B cell (primary cell): ENCODE measurements at regions of chr17 and their contacts with region 1.

Region 1: DNA sequence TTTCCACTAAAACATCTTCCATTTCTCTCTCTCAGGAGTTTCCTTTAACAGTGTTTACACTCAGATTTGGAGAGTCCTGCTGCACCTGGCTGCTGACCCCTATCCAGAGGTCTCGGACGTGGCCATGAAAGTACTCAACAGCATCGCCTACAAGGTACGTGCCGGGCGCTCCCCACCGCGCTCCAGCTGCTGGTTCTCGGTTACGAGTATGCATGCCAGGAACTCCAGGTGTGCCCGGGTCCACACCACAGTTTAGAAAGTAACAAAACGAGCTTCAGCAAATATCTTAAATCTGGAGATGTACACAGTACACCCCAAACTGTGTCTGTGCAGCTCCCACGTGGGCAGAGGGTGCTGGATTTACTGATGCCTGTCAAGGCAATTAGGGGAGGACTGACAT is 82.9 kb upstream of the CHMP6 start:
- DNase-seq: no peak
- ATAC-seq: no peak
- H3K4me3 ChIP-seq: no peak overlapping the region
- H3K4me3 Mint-ChIP-seq: no peak overlapping the region
- H3K27ac ChIP-seq: peak overlapping the region in 1 of 2 donors; percentile 100
- H3K27ac Mint-ChIP-seq: peak overlapping the region; percentile 68
- H3K4me1 ChIP-seq: peaks cover 50 to 57% of the 10 kb centered on the region in 2 donors
- H3K4me1 Mint-ChIP-seq: peaks cover 46% of the 10 kb centered on the region
- H3K27me3 ChIP-seq: no peaks in the 10 kb centered on the region
- H3K27me3 Mint-ChIP-seq: no peaks in the 10 kb centered on the region
- CTCF ChIP-seq: no peak

Region 2: GRCh38 chr17:80683625-80684104 is 225.1 kb before region 1 on chr17:
- CTCF ChIA-PET with region 1: no interaction called
- POLR2A ChIA-PET with region 1: no interaction called
- intact Hi-C with region 1: no loop called
- DNase-seq: no peak
- ATAC-seq: no peak
- H3K4me3 ChIP-seq: no peak overlapping the region
- H3K4me3 Mint-ChIP-seq: no peak overlapping the region
- H3K27ac ChIP-seq: no peak overlapping the region
- H3K27ac Mint-ChIP-seq: no peak overlapping the region
- H3K4me1 ChIP-seq: peaks cover 3 to 9% of the 10 kb centered on the region in 2 donors
- H3K4me1 Mint-ChIP-seq: peaks cover 9% of the 10 kb centered on the region
- H3K27me3 ChIP-seq: no peaks in the 10 kb centered on the region
- H3K27me3 Mint-ChIP-seq: no peaks in the 10 kb centered on the region
- CTCF ChIP-seq: no peak

Region 3: GRCh38 chr17:80789356-80789902 is 119.3 kb before region 1 on chr17:
- CTCF ChIA-PET with region 1: no interaction called
- POLR2A ChIA-PET with region 1: no interaction called
- intact Hi-C with region 1: no loop called
- DNase-seq: no peak
- ATAC-seq: peak; percentile 67
- H3K4me3 ChIP-seq: no peak overlapping the region
- H3K4me3 Mint-ChIP-seq: peak overlapping the region; percentile 73
- H3K27ac ChIP-seq: peak overlapping the region in 1 of 2 donors; percentile 63
- H3K27ac Mint-ChIP-seq: peak overlapping the region; percentile 84
- H3K4me1 ChIP-seq: peaks cover 17% of the 10 kb centered on the region in 2 donors
- H3K4me1 Mint-ChIP-seq: peaks cover 23% of the 10 kb centered on the region
- H3K27me3 ChIP-seq: no peaks in the 10 kb centered on the region
- H3K27me3 Mint-ChIP-seq: no peaks in the 10 kb centered on the region
- CTCF ChIP-seq: no peak

Region 4: GRCh38 chr17:80876950-80877728 is 31.6 kb before region 1 on chr17:
- CTCF ChIA-PET with region 1: interaction called, 9 read pairs
- POLR2A ChIA-PET with region 1: interaction called, 12 read pairs
- intact Hi-C with region 1: loop called (anchors 2 kb)
- DNase-seq: peak; percentile 71
- ATAC-seq: peak; percentile 87
- H3K4me3 ChIP-seq: peak overlapping the region in 4 of 5 experiments; percentile 2 to 55 (median 40)
- H3K4me3 Mint-ChIP-seq: peak overlapping the region; percentile 89
- H3K27ac ChIP-seq: peak overlapping the region; percentile 55 to 66
- H3K27ac Mint-ChIP-seq: peak overlapping the region; percentile 91
- H3K4me1 ChIP-seq: peaks cover 28% of the 10 kb centered on the region in 2 donors
- H3K4me1 Mint-ChIP-seq: peaks cover 28% of the 10 kb centered on the region
- H3K27me3 ChIP-seq: no peaks in the 10 kb centered on the region
- H3K27me3 Mint-ChIP-seq: no peaks in the 10 kb centered on the region
- CTCF ChIP-seq: no peak